SK-N-SH (cell line): ENCODE measurements at regions of chr7 and their contacts with region 1.

Region 1: GRCh38 chr7:151631968-151632749 is 112.5 kb upstream of the RHEB start:
- DNase-seq: peak; percentile 97
- H3K4me3 ChIP-seq: peak overlapping the region; percentile 83 to 87
- H3K27ac ChIP-seq: peak overlapping the region; percentile 53 to 55
- H3K4me1 ChIP-seq: peaks cover 4 to 15% of the 10 kb centered on the region in 2 experiments; a peak in 2 of 4 replicates
- H3K27me3 ChIP-seq: no peaks in the 10 kb centered on the region
- CTCF ChIP-seq: peak; percentile 38
- EP300 ChIP-seq: no peak
- RAD21 ChIP-seq: peak; percentile 49

Region 2: DNA sequence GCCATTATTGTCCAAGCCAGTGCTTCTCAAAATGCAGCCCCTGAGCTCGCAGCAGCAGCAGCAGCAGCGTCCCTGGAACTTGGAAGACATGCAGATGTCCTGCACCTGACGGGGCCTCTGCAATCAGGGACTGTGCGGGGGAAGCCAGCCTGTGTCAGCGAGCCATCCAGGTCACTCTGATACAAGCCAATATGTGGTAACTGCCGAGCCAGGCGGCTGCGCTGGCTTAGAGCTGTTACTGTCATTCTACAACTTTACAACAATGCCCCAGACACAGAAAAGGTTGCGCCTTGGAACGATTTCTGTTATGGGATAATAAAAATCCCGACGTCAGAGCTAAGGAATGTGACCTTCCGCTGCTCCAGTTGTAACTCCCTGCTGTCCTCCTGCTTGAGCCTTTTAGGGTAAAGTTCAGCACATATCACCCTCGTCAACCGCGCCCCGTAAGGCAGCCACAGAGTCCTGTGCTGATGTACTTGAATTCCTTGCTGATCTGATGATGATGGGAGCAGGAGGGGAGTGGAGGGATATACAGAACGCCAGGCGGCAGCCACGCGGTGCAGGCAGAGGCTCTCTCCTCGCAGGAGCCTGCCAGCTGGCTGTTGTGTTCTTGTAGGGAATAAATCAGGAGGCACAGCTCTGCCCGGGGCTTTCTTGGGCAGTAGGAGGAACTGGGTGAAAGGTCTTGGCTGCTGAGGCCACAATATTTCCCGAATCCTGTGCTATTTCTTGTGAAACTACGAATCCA is 172.3 kb before region 1 on chr7:
- CTCF ChIA-PET with region 1: interaction called, 13 read pairs
- POLR2A ChIA-PET with region 1: no interaction called
- DNase-seq: peak; percentile 77
- H3K4me3 ChIP-seq: peak overlapping the region; percentile 23 to 42; a peak in 3 of 4 replicates
- H3K27ac ChIP-seq: peak overlapping the region; percentile 44 to 54; a peak in 3 of 4 replicates
- H3K4me1 ChIP-seq: peaks cover 0 to 14% of the 10 kb centered on the region in 2 experiments; a peak in 1 of 4 replicates
- H3K27me3 ChIP-seq: no peaks in the 10 kb centered on the region
- CTCF ChIP-seq: peak; percentile 44
- EP300 ChIP-seq: peak in 1 of 2 experiments; percentile 31; a peak in 1 of 4 replicates
- RAD21 ChIP-seq: peak; percentile 53

Region 3: GRCh38 chr7:151612374-151613160 is 19.6 kb before region 1 on chr7:
- CTCF ChIA-PET with region 1: interaction called, 47 read pairs
- POLR2A ChIA-PET with region 1: no interaction called
- DNase-seq: no peak
- H3K4me3 ChIP-seq: no peak overlapping the region
- H3K27ac ChIP-seq: no peak overlapping the region
- H3K4me1 ChIP-seq: no peaks in the 10 kb centered on the region
- H3K27me3 ChIP-seq: no peaks in the 10 kb centered on the region
- CTCF ChIP-seq: no peak
- EP300 ChIP-seq: no peak
- RAD21 ChIP-seq: no peak

Region 4: GRCh38 chr7:151648429-151648828 is 16.3 kb after region 1 on chr7:
- CTCF ChIA-PET with region 1: interaction called, 66 read pairs
- POLR2A ChIA-PET with region 1: no interaction called
- DNase-seq: no peak
- H3K4me3 ChIP-seq: no peak overlapping the region
- H3K27ac ChIP-seq: no peak overlapping the region
- H3K4me1 ChIP-seq: peaks cover 0 to 10% of the 10 kb centered on the region in 2 experiments; a peak in 1 of 4 replicates
- H3K27me3 ChIP-seq: no peaks in the 10 kb centered on the region
- CTCF ChIP-seq: no peak
- EP300 ChIP-seq: no peak
- RAD21 ChIP-seq: no peak

Region 5: DNA sequence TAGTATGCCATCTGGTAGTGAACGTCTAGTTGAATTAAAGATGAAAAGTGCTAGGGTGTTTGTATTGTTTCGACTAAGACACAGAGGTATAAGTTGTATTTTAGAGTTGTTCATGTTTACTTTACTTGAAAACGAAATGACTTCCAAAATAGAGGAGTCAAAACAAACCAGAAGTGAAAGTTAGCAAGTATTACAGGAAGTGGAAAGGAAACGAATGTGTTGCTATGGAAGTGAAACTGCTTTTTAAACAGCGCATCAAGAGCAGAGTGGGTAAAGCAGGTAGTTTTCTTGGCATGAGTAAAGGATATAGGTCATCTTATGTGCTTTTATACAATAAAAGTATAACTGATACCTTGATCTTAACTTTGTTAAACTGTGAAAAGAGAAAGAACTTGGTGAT is 304.0 kb after region 1 on chr7:
- CTCF ChIA-PET with region 1: no interaction called
- POLR2A ChIA-PET with region 1: no interaction called
- DNase-seq: no peak
- H3K4me3 ChIP-seq: no peak overlapping the region
- H3K27ac ChIP-seq: no peak overlapping the region
- H3K4me1 ChIP-seq: peaks cover 0 to 4% of the 10 kb centered on the region in 2 experiments; a peak in 1 of 4 replicates
- H3K27me3 ChIP-seq: peaks cover 4% of the 10 kb centered on the region; the same call in 1 of the 2 replicates
- CTCF ChIP-seq: no peak
- EP300 ChIP-seq: no peak
- RAD21 ChIP-seq: no peak